Posterior cingulate gyrus (tissue), 11 donors: ENCODE measurements at regions of chr22 and their contacts with region 1.

Region 1: DNA sequence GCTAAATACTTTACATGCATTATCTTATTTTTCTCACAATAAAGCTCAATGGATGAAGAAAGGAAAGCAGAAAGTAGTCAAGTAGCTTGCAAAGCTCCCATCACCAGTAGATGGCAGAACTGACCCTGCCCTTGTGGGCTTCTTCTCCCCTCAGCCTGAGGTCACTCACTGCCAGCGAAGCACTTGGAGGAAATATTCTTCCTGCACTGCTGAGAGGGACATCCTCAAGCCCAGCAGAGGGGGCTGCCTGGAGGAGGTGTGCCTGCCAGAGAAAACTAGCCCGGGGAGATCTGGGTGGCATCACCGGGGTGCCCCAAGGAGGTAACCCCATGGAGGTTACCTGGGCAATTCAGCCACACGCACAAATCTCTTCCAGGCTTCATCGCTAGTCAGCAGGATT is 6.6 kb downstream of the APOL4 start:
- DNase-seq: peak in 6 of 10 donors; percentile 42 to 92 (median 49)

Region 2: DNA sequence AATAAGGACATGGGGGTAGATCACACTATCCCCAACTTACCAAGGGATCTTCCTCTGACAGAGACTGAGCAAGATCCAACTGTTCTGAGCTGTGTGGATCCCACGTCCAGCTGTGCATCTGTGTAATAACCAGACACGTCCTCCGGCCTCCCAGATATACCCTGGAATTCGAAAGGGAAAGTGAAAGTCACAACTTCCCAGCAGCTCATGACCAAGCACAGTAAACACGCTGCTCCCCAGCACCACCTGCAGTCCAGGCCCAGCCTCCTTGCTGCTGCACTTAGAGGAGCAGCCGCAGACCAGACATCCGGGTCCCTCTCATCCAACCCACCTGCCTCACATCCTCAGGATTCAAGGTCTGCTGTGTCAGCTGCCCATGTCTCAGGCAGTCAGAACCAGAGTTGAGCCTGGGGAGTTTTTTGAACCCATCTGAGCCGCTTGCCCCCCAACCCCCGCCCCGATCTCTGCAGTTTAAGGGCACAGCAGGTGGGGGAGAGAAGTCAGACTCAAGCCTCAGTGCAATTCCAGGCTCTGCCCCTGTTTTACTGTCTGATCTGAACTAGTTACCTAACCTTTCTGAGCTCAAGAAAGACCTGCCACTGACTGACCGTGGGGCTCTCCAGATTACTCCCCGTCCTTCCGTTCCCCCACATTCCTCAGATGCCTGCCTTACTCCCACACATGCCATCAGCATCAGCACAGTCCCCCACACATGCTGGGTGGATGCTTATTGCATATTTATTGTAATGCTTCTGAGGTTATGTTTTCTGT is 44.6 kb after region 1 on chr22 and contains the start of gene APOL2:
- intact Hi-C with region 1: loop called (anchors 5 kb)
- DNase-seq: peak; percentile 77 to 98 (median 88)